ENCODE measurements at regions of chr2 and their contacts with region 1.

Region 1: GRCh38 chr2:101308432-101309210 is at the start of gene RNF149:
- H3K4me3 Mint-ChIP-seq: peak within 1 kb of the TSS; percentile 85
- H3K27ac Mint-ChIP-seq: peak within 1 kb of the TSS; percentile 87
- H3K4me1 Mint-ChIP-seq: peaks cover 56% of the 10 kb centered on the region
- H3K27me3 Mint-ChIP-seq: no peaks in the 10 kb centered on the region

Region 2: GRCh38 chr2:101252408-101253012 is 56.1 kb before region 1 on chr2 and contains the start of gene CNOT11:
- intact Hi-C with region 1: loop called (anchors 1 kb)
- H3K4me3 Mint-ChIP-seq: peak within 1 kb of the TSS; percentile 90
- H3K27ac Mint-ChIP-seq: peak within 1 kb of the TSS; percentile 90
- H3K4me1 Mint-ChIP-seq: peaks cover 47% of the 10 kb centered on the region
- H3K27me3 Mint-ChIP-seq: no peaks in the 10 kb centered on the region

Region 3: GRCh38 chr2:101291973-101292372 is 16.6 kb before region 1 on chr2:
- intact Hi-C with region 1: no loop called
- H3K4me3 Mint-ChIP-seq: no peak overlapping the region
- H3K27ac Mint-ChIP-seq: no peak overlapping the region
- H3K4me1 Mint-ChIP-seq: peaks cover 5% of the 10 kb centered on the region
- H3K27me3 Mint-ChIP-seq: no peaks in the 10 kb centered on the region

Region 4: GRCh38 chr2:101328474-101329007 is 19.9 kb after region 1 on chr2:
- intact Hi-C with region 1: loop called (anchors 1 kb)
- H3K4me3 Mint-ChIP-seq: no peak overlapping the region
- H3K27ac Mint-ChIP-seq: no peak overlapping the region
- H3K4me1 Mint-ChIP-seq: peaks cover 15% of the 10 kb centered on the region
- H3K27me3 Mint-ChIP-seq: no peaks in the 10 kb centered on the region

Region 5: GRCh38 chr2:101341901-101342624 is 33.4 kb after region 1 on chr2:
- intact Hi-C with region 1: loop called (anchors 5 kb)
- H3K4me3 Mint-ChIP-seq: no peak overlapping the region
- H3K27ac Mint-ChIP-seq: no peak overlapping the region
- H3K4me1 Mint-ChIP-seq: peaks cover 38% of the 10 kb centered on the region
- H3K27me3 Mint-ChIP-seq: peaks cover 5% of the 10 kb centered on the region

Measured in dendritic cell treated with granulocyte-macrophage colony-stimulating factor and Interleukin-4, amounts not matched to agents 40 ng/mL and 50 ng/mL, for 4 days (primary cell).